Stomach (tissue), 19 donors: ENCODE measurements at regions of chr2 and their contacts with region 1.

Region 1: GRCh38 chr2:227766373-227766883 is 20.7 kb downstream of the SCYGR8 start:
- DNase-seq: peak; percentile 85 to 91
- H3K4me3 ChIP-seq: no peak overlapping the region
- H3K27ac ChIP-seq: no peak overlapping the region
- H3K4me1 ChIP-seq: peaks cover 0 to 9% (median 4%) of the 10 kb centered on the region in 4 donors
- H3K27me3 ChIP-seq: no peaks in the 10 kb centered on the region
- CTCF ChIP-seq: peak in 5 of 7 experiments; percentile 80 to 88 (median 82)
- EP300 ChIP-seq: no peak
- POLR2A ChIP-seq: no peak

Region 2: DNA sequence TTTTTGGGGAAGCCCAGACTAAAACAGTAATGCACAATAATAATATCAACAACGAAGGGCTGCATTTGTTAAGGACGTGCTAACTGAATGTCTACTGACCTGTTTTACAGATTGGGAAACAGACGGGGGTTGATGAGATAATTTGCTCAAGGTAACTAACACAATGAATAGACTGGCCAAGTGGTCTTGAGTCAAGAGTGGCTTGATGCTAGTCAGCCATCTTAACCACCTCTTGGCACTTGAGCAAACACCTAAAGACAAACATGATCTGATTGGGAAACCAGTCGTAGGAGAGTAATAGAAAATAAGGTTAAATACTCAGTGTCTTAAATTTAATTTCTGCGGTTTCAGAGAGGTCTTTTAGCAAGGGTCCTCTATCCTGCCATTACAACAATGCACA is 916.4 kb before region 1 on chr2:
- intact Hi-C with region 1: no loop called
- DNase-seq: no peak
- H3K4me3 ChIP-seq: no peak overlapping the region
- H3K27ac ChIP-seq: no peak overlapping the region
- H3K4me1 ChIP-seq: peaks cover 0 to 7% (median 3%) of the 10 kb centered on the region in 4 donors
- H3K27me3 ChIP-seq: no peaks in the 10 kb centered on the region
- CTCF ChIP-seq: no peak
- EP300 ChIP-seq: no peak
- POLR2A ChIP-seq: no peak

Region 3: DNA sequence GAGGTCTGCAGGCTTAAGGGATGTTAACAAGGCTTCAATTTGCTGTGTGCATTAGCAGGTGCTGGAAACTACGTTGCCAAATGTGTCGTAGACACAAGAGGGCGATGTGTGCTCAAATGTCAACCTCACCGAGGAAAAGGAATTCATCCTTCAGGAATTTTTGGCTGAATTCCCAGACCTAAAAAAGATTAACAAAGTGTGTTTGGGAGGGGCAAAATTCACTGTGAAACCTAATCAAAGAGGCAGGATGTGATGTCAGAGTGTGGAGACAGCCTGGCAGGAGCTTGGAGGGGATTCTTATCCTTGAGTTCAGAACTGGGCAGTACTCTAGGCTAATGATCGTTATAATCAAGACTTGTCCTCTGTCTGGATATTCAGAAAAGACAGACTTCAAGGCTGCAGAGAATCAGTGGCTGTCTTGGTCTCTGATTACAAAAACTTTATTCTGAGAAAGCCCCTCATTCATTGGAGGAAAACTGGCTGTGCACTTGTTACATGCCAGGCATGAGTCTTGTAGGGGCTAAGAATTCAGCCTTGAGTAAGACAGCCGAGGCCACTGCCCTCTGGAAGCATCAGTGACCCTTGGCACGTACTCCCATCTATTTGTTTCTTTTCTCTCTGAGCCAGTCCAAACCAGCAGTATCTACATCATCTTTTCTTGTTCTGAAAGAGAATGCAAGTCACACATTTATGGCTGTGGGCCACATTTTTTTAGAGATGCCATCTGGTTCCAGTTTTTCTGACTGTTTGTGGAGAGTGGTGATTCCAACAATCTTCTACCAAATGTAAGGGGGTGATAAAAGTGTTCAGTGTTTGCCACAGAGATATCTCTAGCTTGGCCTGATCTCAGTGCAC is 360.0 kb before region 1 on chr2:
- intact Hi-C with region 1: loop called (anchors 10 kb)
- DNase-seq: peak; percentile 73 to 95
- H3K4me3 ChIP-seq: no peak overlapping the region
- H3K27ac ChIP-seq: peak overlapping the region in 4 of 5 donors; percentile 47 to 77 (median 66)
- H3K4me1 ChIP-seq: peaks cover 7 to 20% (median 11%) of the 10 kb centered on the region in 4 donors
- H3K27me3 ChIP-seq: no peaks in the 10 kb centered on the region
- CTCF ChIP-seq: peak in 5 of 7 experiments; percentile 24 to 72 (median 57)
- EP300 ChIP-seq: no peak
- POLR2A ChIP-seq: no peak

Region 4: GRCh38 chr2:227661019-227661649 is 105.3 kb before region 1 on chr2:
- intact Hi-C with region 1: loop called (anchors 5 kb)
- DNase-seq: no peak
- H3K4me3 ChIP-seq: no peak overlapping the region
- H3K27ac ChIP-seq: no peak overlapping the region
- H3K4me1 ChIP-seq: peaks cover 0 to 6% (median 0%) of the 10 kb centered on the region in 4 donors
- H3K27me3 ChIP-seq: no peaks in the 10 kb centered on the region
- CTCF ChIP-seq: no peak
- EP300 ChIP-seq: no peak
- POLR2A ChIP-seq: no peak